Ascending aorta (tissue), 2 donors: ENCODE measurements at regions of chr10 and their contacts with region 1.

Region 1: DNA sequence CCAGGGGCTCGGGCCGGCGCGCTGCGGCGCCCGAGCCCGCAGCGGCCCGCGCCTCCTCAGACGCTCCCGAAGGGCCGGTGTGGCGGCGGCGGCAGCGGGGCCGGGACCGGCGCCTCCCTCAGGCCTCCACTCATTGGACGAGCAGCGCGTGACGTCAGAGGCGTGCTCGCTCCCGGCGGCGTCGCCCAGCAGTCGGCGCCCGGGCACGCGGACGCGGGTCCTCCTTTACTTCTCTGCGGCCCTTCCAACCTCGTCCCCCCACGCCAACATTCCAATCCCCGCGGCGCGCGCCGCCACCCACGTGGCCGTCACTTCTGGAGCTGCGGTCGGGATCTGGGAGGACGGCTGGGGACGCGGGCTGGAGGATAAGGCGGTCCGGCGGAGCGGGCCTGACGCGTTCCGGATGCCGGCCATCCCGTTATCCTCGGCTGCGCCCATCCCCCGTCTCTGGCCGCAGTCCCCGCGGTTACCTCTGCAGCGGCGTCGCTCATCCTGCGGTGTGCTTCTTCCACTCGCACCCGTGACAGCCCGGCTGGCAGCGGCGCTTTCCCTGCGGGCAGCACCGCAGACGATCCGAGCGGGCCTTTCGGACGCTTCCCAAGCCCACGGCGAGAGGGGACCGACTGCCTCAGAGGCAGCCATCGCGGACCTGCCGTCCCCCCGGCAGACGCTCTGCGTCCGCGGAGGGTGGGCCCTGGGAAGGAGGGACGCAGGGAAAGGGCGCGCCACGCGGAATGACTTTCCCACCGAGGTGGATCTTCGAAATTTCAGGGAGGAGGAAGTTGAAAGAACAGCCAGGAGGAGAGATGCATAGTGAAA is at the start of gene PDZD8:
- DNase-seq: peak; percentile 68 to 96
- H3K4me3 ChIP-seq: peak within 1 kb of the TSS; percentile 92 to 96
- H3K27ac ChIP-seq: peak within 1 kb of the TSS; percentile 96 to 97
- H3K4me1 ChIP-seq: peaks cover 0 to 13% of the 10 kb centered on the region in 2 donors
- H3K27me3 ChIP-seq: no peaks in the 10 kb centered on the region
- CTCF ChIP-seq: no peak
- total RNA-seq, gene PDZD8: 21.0 TPM

Region 2: GRCh38 chr10:117413928-117414618 is 38.5 kb after region 1 on chr10:
- intact Hi-C with region 1: no loop called
- DNase-seq: no peak
- H3K4me3 ChIP-seq: no peak overlapping the region
- H3K27ac ChIP-seq: no peak overlapping the region
- H3K4me1 ChIP-seq: no peaks in the 10 kb centered on the region
- H3K27me3 ChIP-seq: no peaks in the 10 kb centered on the region
- CTCF ChIP-seq: no peak

Region 3: DNA sequence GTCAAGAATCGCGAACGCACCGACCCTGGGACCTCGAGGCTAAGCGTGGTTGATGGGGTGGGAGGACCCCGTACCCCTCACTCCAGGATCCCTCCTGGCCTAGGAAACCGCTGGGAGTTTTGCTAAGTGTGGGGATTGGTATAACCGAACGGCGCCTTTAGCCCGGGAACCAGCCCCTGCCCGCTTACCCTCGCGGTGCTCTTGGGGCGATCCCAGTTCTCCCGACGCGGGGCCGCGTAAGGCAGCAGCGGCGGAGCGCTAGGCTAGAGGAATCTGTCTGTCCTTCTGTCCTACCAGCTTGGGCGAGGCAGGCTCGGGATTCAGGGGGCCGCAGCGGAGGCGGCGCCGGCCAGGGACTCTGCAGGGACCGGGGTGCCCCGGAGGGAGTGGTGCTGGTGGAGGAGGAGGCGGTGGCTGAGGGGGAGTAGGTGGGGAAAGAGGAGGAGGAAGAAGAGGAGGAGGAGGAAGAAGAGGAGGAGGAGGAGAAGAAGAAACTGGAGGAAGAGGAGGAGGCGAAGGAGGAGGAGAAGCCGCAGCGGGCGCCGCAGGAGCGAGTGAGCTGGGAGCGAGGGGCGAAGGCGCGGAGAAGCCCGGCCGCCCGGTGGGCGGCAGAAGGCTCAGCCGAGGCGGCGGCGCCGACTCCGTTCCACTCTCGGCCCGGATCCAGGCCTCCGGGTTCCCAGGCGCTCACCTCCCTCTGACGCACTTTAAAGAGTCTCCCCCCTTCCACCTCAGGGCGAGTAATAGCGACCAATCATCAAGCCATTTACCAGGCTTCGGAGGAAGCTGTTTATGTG is 166.5 kb after region 1 on chr10:
- intact Hi-C with region 1: loop called (anchors 10 kb)
- DNase-seq: no peak
- H3K4me3 ChIP-seq: peak overlapping the region; percentile 5 to 46
- H3K27ac ChIP-seq: no peak overlapping the region
- H3K4me1 ChIP-seq: peaks cover 6 to 22% of the 10 kb centered on the region in 2 donors
- H3K27me3 ChIP-seq: peaks cover 47% of the 10 kb centered on the region
- CTCF ChIP-seq: no peak

Region 4: DNA sequence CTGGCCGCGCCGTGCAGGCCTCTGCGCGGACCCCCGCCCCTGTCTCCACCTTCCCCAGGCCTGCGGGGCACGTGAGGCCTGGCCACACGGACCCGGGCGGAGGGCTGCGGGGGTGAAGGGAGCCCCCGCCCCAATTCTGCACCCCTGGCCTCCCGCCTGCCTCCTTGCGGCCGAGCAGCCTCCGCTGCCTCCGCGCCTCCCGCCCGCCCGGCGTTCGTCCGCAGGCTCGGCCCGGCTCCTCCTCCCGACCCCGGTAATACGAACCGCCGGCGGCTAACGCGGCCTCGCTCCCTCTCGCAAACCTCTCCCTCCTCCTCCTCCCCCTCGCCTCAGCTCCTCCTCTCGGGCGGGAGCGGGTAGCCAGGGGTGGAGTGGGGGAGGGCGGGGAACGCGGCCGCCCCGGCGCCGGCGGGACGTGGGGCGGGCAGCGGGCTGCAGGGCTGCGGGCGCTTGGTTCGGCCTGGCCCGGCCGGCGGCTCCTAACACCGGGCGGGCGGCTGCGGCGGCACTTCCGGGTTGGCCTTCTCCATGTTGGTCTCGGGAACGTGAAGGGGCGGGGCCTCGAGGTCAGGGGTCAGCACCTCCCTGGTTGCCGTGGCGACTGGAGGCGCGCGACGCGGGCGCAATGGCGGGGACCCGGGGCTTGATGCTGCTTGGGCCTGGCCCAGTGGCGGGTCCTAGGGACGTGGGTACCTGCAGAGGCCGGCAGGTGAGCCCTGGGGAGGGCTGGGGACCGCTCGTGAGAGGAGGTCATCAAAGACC is 671.0 kb after region 1 on chr10 and contains the start of gene RAB11FIP2:
- intact Hi-C with region 1: loop called (anchors 2 kb)
- DNase-seq: peak; percentile 82 to 98
- H3K4me3 ChIP-seq: peak within 1 kb of the TSS; percentile 75 to 96
- H3K27ac ChIP-seq: peak within 1 kb of the TSS; percentile 91 to 98
- H3K4me1 ChIP-seq: peaks cover 2 to 22% of the 10 kb centered on the region in 2 donors
- H3K27me3 ChIP-seq: no peaks in the 10 kb centered on the region
- CTCF ChIP-seq: peak in 1 of 3 experiments; percentile 17
- total RNA-seq, gene RAB11FIP2: 2.8 TPM